Left ventricle myocardium superior (tissue), 1 donor: ENCODE measurements at regions of chr7 and their contacts with region 1.

Region 1: DNA sequence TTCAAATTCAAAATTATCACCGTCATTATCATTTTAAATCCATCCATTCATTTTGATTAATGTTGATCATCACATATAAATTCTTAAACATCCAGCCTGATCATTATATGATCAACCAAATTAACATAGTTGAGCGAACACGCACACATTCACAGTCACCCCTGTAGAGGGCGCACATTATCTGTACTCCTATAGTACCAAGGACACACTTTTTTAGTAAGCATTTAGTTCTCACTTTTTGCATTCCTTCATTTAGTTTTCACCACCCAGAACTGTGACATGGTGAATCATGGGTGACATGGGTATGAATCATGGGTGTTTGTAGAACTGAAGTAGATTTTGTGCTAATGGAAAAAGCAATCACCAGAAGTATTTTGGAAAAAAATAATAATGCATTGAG is 26.0 kb upstream of the ZNF735 start:
- DNase-seq: no peak
- ATAC-seq: no peak

Region 2: DNA sequence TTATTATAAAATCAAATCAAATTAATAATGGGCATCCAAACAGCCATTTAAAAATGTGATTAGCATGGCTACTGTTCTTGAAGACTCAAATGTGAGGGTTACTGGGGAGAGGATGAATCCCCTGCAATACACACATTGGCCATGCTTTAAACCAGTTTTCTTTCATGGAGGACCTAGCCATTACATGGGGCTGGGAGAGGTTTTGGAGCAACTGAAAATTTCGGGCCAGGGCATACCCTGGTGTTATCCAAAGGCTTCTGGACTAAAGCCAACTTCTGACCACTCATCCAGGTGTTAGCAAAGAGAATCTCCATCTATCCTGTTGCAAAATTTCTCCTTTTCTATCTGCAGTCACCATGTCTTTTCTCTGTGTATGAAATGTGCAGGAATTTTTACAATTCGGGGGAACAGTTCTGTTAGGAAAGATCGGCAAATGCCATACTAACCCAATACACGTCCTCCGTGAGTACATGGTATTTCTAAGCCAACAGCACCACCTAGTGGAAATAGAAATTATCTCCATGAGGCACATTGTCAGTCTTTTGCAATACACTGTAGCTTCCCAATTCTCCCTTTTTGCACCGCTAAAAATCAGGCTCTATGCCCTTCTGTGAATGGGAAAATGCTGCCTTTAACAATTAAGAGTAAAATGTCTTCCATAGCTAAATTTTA is 437.9 kb after region 1 on chr7:
- intact Hi-C with region 1: loop called (anchors 2 kb)
- DNase-seq: no peak
- ATAC-seq: peak; percentile 82